ENCODE measurements at regions of chr11 and their contacts with region 1.

Region 1: GRCh38 chr11:369336-370018 is at the start of gene B4GALNT4:
- DNase-seq: no peak
- ATAC-seq: no peak
- H3K4me3 ChIP-seq: peak within 1 kb of the TSS; percentile 53 to 83 (median 63)
- H3K27ac ChIP-seq: no peak within 1 kb of the TSS
- H3K4me1 ChIP-seq: peaks cover 58% of the 10 kb centered on the region
- H3K27me3 ChIP-seq: peaks cover 8 to 29% of the 10 kb centered on the region in 2 experiments; a peak in 4 of 5 replicates
- CTCF ChIP-seq: no peak
- EP300 ChIP-seq: no peak
- POLR2A ChIP-seq: 0 out of 4 replicates have a peak, but pooled peaks of 1 of the 2 experiments have one; percentile 23
- RAD21 ChIP-seq: no peak
- total RNA-seq, gene B4GALNT4: 24.8 and 50.1 TPM in 2 replicates

Region 2: GRCh38 chr11:304915-305843 is 64.3 kb before region 1 on chr11:
- CTCF ChIA-PET with region 1: interaction called, 4 read pairs
- POLR2A ChIA-PET with region 1: interaction called, 4 read pairs
- in situ Hi-C with region 1: loop called (anchors 5 kb)
- intact Hi-C with region 1: no loop called
- DNase-seq: peak; percentile 61
- ATAC-seq: no peak
- H3K4me3 ChIP-seq: peak overlapping the region in 1 of 3 experiments; percentile 27; a peak in 2 of 6 replicates
- H3K27ac ChIP-seq: no peak overlapping the region
- H3K4me1 ChIP-seq: peaks cover 61% of the 10 kb centered on the region
- H3K27me3 ChIP-seq: peaks cover under 1 to 5% of the 10 kb centered on the region in 2 experiments; a peak in 3 of 5 replicates
- CTCF ChIP-seq: peak; percentile 73
- EP300 ChIP-seq: no peak
- POLR2A ChIP-seq: no peak
- RAD21 ChIP-seq: peak; percentile 13; the same call in 1 of the 2 replicates

Region 3: DNA sequence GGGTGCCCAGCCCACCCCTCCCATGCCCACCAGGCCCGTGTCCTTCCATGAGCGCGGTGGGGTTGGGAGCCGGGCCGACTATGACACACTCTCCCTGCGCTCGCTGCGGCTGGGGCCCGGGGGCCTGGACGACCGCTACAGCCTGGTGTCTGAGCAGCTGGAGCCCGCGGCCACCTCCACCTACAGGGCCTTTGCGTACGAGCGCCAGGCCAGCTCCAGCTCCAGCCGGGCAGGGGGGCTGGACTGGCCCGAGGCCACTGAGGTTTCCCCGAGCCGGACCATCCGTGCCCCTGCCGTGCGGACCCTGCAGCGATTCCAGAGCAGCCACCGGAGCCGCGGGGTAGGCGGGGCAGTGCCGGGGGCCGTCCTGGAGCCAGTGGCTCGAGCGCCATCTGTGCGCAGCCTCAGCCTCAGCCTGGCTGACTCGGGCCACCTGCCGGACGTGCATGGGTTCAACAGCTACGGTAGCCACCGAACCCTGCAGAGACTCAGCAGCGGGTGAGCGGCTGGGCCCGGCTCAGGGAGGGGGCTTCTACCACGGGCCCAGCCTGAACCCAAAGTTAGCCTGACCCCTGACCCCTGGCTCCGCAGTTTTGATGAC is 27.6 kb after region 1 on chr11:
- CTCF ChIA-PET with region 1: no interaction called
- POLR2A ChIA-PET with region 1: interaction called, 7 read pairs
- in situ Hi-C with region 1: no loop called
- intact Hi-C with region 1: loop called (anchors 2 kb)
- DNase-seq: peak; percentile 63
- ATAC-seq: peak; percentile 81
- H3K4me3 ChIP-seq: peak overlapping the region; percentile 33 to 68 (median 54); a peak in 5 of 6 replicates
- H3K27ac ChIP-seq: peak overlapping the region; percentile 44
- H3K4me1 ChIP-seq: peaks cover 53% of the 10 kb centered on the region
- H3K27me3 ChIP-seq: no peaks in the 10 kb centered on the region; a peak in 1 of 5 replicates
- CTCF ChIP-seq: peak; percentile 93
- EP300 ChIP-seq: no peak
- POLR2A ChIP-seq: no peak
- RAD21 ChIP-seq: peak; percentile 90